ENCODE measurements at regions of chr6 and their contacts with region 1.

Region 1: GRCh38 chr6:166313255-166314070 is 5.3 kb upstream of the PRR18 start:
- H3K4me3 ChIP-seq: no peak overlapping the region
- H3K27ac ChIP-seq: no peak overlapping the region
- H3K4me1 ChIP-seq: no peaks in the 10 kb centered on the region
- CTCF ChIP-seq: peak; percentile 11; the same call in 1 of the 2 replicates

Region 2: GRCh38 chr6:166275714-166276166 is 37.7 kb before region 1 on chr6:
- CTCF ChIA-PET with region 1: interaction called, 17 read pairs
- POLR2A ChIA-PET with region 1: no interaction called
- H3K4me3 ChIP-seq: no peak overlapping the region
- H3K27ac ChIP-seq: no peak overlapping the region
- H3K4me1 ChIP-seq: no peaks in the 10 kb centered on the region
- CTCF ChIP-seq: peak; percentile 94

Region 3: DNA sequence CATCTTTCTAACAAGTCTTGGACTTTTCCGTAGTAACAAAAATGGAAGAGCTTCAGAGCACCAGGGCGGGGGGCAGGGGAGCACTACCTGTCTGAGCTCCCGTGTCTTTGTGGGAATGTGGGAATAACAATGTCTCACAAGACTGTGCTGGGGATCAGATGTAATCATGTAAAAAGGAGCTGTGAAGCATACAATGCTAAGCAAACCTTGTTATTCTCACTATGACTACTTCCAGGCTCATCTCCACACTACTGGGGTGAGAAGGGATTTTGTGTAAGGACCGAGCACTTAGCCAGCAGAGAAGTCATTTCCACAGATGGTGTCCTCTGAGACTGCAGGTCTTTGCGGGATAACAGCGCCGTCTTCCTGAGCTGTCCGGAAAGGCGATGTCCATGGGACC is 32.4 kb before region 1 on chr6:
- CTCF ChIA-PET with region 1: interaction called, 17 read pairs
- POLR2A ChIA-PET with region 1: no interaction called
- H3K4me3 ChIP-seq: no peak overlapping the region
- H3K27ac ChIP-seq: no peak overlapping the region
- H3K4me1 ChIP-seq: no peaks in the 10 kb centered on the region
- CTCF ChIP-seq: no peak

Region 4: GRCh38 chr6:166296035-166296883 is 17.2 kb before region 1 on chr6:
- CTCF ChIA-PET with region 1: interaction called, 17 read pairs
- POLR2A ChIA-PET with region 1: no interaction called
- H3K4me3 ChIP-seq: no peak overlapping the region
- H3K27ac ChIP-seq: no peak overlapping the region
- H3K4me1 ChIP-seq: no peaks in the 10 kb centered on the region
- CTCF ChIP-seq: no peak

Region 5: GRCh38 chr6:166325383-166326042 is 12.1 kb after region 1 on chr6:
- CTCF ChIA-PET with region 1: interaction called, 22 read pairs
- POLR2A ChIA-PET with region 1: no interaction called
- H3K4me3 ChIP-seq: no peak overlapping the region
- H3K27ac ChIP-seq: no peak overlapping the region
- H3K4me1 ChIP-seq: 0 out of 2 replicates have a peak, but pooled peaks cover under 1% of the 10 kb centered on the region
- CTCF ChIP-seq: no peak

Region 6: DNA sequence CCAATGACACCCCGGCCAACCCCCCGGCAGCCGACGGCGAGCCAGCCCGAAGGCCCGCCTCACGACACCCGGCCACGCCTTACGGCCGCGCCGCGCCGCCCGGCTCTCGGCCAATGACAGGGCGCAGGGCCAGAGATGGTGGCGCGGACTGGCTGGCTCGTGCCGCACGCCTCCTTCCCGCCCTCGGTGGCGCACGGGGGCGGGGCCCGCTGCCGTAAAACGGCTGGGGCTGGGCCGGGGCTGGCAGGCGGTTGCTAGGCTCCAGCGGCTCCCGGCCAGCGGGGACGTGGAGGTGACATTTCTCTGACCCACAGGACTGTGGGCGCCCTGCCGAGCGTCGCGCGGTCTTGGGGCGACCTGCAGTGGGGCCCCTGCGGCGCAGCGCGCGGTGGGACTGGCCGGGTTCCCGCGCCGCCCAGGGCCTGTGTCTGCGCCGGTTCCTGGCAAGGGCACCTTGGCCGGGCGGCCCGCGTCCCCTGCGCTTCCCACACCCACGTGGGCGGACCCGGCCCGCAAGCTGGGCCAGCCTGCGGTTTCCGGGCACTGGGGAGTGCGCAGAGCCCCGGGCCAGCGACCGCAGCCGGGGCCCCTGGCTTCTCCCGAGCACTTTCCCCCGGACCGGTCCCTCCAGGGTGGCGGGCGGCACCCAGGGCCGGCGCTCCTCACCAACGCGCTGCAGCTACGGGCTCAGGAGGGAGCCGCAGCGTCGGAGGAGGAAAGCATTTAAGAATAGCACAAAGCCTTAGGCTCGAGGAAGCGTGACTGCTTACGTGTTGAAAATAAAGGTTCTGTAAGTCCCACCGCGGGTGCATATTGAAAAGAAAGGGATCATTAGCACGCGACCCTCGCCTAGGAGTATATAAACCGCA is 69.7 kb after region 1 on chr6 and contains the start of gene MPC1:
- CTCF ChIA-PET with region 1: interaction called, 37 read pairs
- POLR2A ChIA-PET with region 1: no interaction called
- H3K4me3 ChIP-seq: peak within 1 kb of the TSS; percentile 82
- H3K27ac ChIP-seq: peak within 1 kb of the TSS; percentile 69
- H3K4me1 ChIP-seq: 0 out of 2 replicates have a peak, but pooled peaks cover 3% of the 10 kb centered on the region
- CTCF ChIP-seq: no peak

Region 7: GRCh38 chr6:166402582-166403277 is 89.3 kb after region 1 on chr6:
- CTCF ChIA-PET with region 1: interaction called, 54 read pairs
- POLR2A ChIA-PET with region 1: no interaction called
- H3K4me3 ChIP-seq: no peak overlapping the region
- H3K27ac ChIP-seq: no peak overlapping the region
- H3K4me1 ChIP-seq: peaks cover 5% of the 10 kb centered on the region
- CTCF ChIP-seq: no peak

Measured in HEK293 (cell line).